ENCODE measurements at regions of chr10 and their contacts with region 1.

Region 1: GRCh38 chr10:31508882-31509281 is 189.9 kb downstream of the ZEB1 start:
- DNase-seq: no peak
- H3K4me3 Mint-ChIP-seq: no peak overlapping the region
- H3K27ac Mint-ChIP-seq: no peak overlapping the region
- H3K4me1 Mint-ChIP-seq: no peaks in the 10 kb centered on the region
- H3K27me3 Mint-ChIP-seq: no peaks in the 10 kb centered on the region
- CTCF ChIP-seq: no peak

Region 2: DNA sequence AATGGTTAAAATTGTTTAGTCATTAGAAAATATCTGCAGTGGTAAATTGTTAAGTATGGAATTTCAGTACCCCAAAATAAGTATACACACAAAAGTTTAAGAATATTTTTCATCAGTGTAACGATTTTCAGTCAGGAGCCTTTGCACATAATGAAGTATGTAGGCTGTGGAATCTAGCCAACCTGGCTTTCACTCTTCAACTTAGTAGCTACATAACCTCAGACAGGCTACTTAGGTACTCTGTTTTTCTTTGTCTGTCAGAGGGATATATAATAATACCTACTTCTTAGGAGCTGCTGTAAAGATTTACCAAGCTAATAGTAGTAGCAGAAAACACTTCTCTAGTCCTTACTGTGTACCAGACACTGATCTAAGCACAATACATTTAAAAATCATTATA is 52.4 kb before region 1 on chr10:
- CTCF ChIA-PET with region 1: no interaction called
- intact Hi-C with region 1: no loop called
- DNase-seq: no peak
- H3K4me3 Mint-ChIP-seq: no peak overlapping the region
- H3K27ac Mint-ChIP-seq: no peak overlapping the region
- H3K4me1 Mint-ChIP-seq: no peaks in the 10 kb centered on the region
- H3K27me3 Mint-ChIP-seq: no peaks in the 10 kb centered on the region
- CTCF ChIP-seq: no peak

Region 3: GRCh38 chr10:31782701-31783100 is 273.8 kb after region 1 on chr10:
- CTCF ChIA-PET with region 1: no interaction called
- intact Hi-C with region 1: loop called (anchors 10 kb)
- DNase-seq: no peak
- H3K4me3 Mint-ChIP-seq: no peak overlapping the region
- H3K27ac Mint-ChIP-seq: no peak overlapping the region
- H3K4me1 Mint-ChIP-seq: no peaks in the 10 kb centered on the region
- H3K27me3 Mint-ChIP-seq: no peaks in the 10 kb centered on the region
- CTCF ChIP-seq: no peak

Measured in Calu3 (cell line).